ENCODE measurements at regions of chr9 and their contacts with region 1.

Region 1: GRCh38 chr9:88814577-88814976 is 176.7 kb upstream of the S1PR3 start:
- DNase-seq: peak; percentile 70 to 89 (median 86)
- ATAC-seq: peak; percentile 84 to 87
- H3K4me3 ChIP-seq: no peak overlapping the region
- H3K27ac ChIP-seq: peak overlapping the region; percentile 95
- H3K4me1 ChIP-seq: peaks cover 12% of the 10 kb centered on the region
- H3K27me3 ChIP-seq: no peaks in the 10 kb centered on the region

Region 2: GRCh38 chr9:88880205-88880604 is 65.6 kb after region 1 on chr9:
- intact Hi-C with region 1: no loop called
- DNase-seq: no peak
- ATAC-seq: no peak
- H3K4me3 ChIP-seq: no peak overlapping the region
- H3K27ac ChIP-seq: no peak overlapping the region
- H3K4me1 ChIP-seq: no peaks in the 10 kb centered on the region
- H3K27me3 ChIP-seq: no peaks in the 10 kb centered on the region

Region 3: DNA sequence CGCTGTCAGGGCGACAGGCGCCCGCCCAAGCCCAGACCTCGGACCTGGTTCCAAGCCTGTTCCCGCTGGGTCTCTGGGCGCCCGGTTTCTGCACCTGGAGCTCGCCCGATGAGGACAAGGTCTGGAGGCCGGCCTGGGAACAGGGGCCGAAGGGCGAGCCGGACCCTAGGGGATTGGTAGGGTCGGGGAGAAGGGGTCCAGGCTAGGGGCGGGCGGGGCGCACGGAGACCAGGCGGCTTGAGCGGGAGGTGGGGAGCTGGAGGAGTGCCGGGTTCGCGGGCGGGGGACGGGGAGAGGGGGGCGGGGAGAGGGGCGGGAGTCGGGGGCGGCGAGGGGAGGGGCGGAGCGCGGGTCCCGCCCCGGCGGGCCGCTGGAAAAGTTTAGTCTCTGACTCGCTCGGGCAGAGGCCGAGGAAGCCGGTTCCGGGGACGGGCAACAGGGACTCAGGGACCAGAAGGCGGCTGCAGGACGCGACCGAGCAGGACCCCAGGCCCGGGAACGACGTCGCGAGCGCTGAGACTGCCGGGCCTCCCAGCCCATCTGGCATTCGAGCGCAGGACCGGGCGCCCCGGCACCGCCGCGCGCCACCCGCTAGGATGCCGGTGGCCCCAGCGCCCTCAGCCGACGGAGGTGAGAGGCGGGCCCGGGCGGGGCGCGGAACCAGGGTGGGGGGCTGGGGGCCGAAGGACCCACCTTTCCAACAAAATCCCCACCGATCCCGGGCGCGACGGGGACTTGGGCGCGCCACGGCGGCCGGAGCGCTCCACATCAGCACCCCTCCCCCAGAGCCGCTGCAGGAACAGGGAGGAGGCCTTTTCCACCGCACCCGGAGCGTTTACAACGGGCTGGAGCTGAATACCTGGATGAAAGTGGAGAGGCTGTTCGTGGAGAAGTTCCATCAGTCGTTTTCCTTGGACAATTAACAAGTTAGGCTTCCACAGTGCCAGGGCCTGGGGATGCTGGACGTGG is 176.8 kb after region 1 on chr9 and contains the start of gene S1PR3:
- intact Hi-C with region 1: loop called in 1 of 4 experiments (anchors 10 kb)
- DNase-seq: peak; percentile 78 to 89 (median 87)
- ATAC-seq: peak; percentile 86
- H3K4me3 ChIP-seq: peak within 1 kb of the TSS; percentile 83
- H3K27ac ChIP-seq: peak within 1 kb of the TSS; percentile 77
- H3K4me1 ChIP-seq: peaks cover 5% of the 10 kb centered on the region
- H3K27me3 ChIP-seq: no peaks in the 10 kb centered on the region
- total RNA-seq, gene S1PR3: 37.2 to 51.6 (median 38.3) TPM

Measured in right cardiac atrium (tissue), 5 donors.